ENCODE measurements at regions of chr20 and their contacts with region 1.

Region 1: GRCh38 chr20:58870239-58871014 is 17.9 kb downstream of the GNAS start:
- DNase-seq: peak in 1 of 2 experiments; percentile 69
- H3K4me3 ChIP-seq: no peak overlapping the region
- H3K27ac ChIP-seq: no peak overlapping the region
- H3K4me1 ChIP-seq: no peaks in the 10 kb centered on the region
- H3K27me3 ChIP-seq: no peaks in the 10 kb centered on the region
- CTCF ChIP-seq: peak; percentile 97

Region 2: DNA sequence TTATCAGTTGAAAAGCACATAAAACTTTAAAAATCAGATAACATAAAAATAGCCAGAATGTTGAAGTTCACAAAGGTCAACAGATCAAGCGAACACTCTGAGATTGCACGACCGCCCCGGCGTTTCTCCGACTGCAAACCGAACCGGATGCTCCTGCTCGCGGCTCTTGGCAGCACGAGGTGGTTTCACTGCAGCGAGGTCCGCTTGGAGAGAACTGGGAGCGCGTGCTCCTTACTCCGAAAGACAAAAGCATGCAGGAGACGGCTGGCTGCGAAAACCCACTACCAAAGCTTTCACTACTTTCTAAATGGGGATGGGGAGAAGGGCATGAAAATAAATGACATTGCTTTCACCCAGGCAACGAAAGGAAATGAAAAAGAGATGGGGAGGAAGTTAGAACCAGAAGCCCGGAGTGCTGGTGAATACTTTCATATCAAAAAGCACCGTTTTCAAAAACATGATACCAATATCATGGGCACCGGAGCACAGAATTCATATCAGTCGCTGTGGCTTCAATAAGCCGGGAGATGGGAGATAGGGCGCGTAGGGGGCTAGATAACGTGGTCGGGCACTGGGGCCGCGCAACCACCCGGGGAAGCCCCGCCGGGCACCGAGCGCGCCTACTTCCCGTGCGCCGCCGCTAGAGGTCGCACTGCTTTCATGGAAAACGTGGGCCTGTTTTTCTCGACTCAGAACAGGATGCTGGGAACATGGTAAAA is 633.7 kb before region 1 on chr20:
- CTCF ChIA-PET with region 1: no interaction called
- POLR2A ChIA-PET with region 1: no interaction called
- intact Hi-C with region 1: loop called (anchors 10 kb)
- DNase-seq: peak; percentile 51 to 75
- H3K4me3 ChIP-seq: peak overlapping the region; percentile 68
- H3K27ac ChIP-seq: no peak overlapping the region
- H3K4me1 ChIP-seq: peaks cover 8% of the 10 kb centered on the region; the same call in 1 of the 2 replicates
- H3K27me3 ChIP-seq: no peaks in the 10 kb centered on the region
- CTCF ChIP-seq: peak; percentile 97

Region 3: DNA sequence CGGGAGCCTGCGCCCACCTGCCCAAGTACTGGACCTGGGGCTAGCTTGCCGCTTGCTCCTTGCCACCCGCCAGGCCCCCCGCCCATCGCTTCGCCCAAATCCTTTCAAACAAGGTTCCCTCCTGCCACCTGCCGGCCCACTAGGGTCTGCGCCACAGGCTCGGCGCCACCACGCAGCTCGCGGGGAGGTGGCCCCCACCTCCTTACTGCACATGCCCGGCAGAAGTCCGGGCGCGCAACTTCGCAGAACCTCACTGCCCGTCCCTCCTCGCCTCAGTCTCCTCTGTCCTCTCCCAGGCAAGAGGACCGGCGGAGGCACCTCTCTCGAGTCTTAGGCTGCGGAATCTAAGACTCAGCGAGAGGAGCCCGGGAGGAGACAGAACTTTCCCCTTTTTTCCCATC is 31.0 kb before region 1 on chr20:
- CTCF ChIA-PET with region 1: interaction called, 11 read pairs
- POLR2A ChIA-PET with region 1: no interaction called
- intact Hi-C with region 1: no loop called
- DNase-seq: peak in 1 of 2 experiments; percentile 23
- H3K4me3 ChIP-seq: no peak overlapping the region
- H3K27ac ChIP-seq: no peak overlapping the region
- H3K4me1 ChIP-seq: no peaks in the 10 kb centered on the region
- H3K27me3 ChIP-seq: peaks cover 38% of the 10 kb centered on the region
- CTCF ChIP-seq: peak; percentile 54; the same call in 1 of the 2 replicates

Region 4: DNA sequence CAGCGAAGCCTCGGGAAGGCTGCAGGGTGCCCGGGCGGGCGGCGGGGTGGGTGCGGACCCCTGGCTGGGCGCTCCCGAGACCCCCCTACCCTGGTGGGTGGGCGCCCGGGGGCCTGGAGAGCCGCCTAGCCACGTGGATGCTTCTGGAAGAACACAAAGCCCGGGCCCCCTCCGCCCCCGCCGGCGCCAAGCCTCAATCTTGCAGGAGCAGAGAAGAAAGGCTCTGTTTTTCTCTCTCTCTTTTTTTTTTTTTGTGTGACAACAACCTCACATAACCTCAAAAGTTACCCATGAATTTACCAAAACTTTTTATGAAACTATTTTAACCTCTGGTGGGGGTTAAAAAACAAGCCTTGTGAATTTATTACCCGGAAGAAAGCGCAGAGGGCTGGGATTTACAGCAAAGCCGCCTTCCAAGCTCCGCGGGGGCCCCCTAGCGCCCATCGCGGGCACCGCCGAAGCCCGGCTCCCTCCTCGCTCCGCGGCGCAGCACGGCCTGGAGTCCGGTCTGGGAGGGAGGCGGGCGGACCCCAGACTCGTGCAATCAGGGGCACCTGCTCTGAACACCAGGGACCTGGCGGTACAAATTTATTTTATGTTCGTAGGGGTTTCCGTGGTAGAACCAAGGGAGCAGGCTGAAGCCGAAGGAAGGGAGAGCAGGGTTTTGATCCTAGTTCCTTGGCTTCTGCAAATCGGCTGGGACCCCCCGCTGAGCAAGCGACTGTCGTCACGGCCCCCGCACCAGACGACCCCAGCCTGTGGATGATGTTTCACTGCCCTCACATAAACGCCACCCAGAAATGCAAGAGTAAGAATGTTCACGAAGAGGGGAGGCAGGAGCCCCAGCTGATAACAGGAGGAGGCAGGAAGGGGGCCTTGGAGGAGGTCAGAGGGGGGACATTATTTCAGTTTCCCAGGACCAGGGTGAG is 352.1 kb after region 1 on chr20:
- CTCF ChIA-PET with region 1: interaction called, 7 read pairs
- POLR2A ChIA-PET with region 1: no interaction called
- intact Hi-C with region 1: loop called (anchors 1 kb)
- DNase-seq: peak; percentile 53 to 70
- H3K4me3 ChIP-seq: peak overlapping the region; percentile 50; the same call in 1 of the 2 replicates
- H3K27ac ChIP-seq: no peak overlapping the region
- H3K4me1 ChIP-seq: no peaks in the 10 kb centered on the region
- H3K27me3 ChIP-seq: peaks cover 97% of the 10 kb centered on the region
- CTCF ChIP-seq: peak; percentile 98

Region 5: DNA sequence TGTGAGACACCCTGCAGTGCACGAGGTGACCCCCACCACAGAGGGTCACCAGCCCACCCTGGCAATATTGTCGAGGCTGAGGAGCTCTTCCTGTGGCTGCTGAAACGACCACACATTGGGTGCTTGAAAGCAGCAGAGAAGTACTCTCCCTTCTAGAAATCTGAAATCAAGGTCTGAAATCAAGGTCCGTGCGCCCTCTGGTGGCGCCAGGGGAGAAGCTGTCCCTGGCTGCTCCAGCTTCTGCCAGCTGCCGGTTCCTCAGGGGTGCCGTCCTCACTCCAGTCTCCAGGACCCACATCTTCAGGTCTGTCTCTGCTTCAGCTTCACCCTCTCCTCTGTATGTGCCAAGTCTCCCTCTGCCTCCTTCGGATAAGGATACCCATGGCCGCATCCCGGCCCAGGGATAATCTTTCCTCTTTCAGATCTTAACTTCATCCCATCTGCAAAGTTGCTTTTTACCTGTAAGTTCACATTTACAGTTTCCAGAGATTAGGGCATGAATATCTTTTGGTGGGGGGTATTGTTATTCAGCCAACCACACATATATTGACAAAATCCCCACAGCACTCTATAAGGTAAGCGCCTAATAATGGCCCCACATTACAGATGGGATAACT is 625.6 kb after region 1 on chr20:
- CTCF ChIA-PET with region 1: no interaction called
- POLR2A ChIA-PET with region 1: no interaction called
- intact Hi-C with region 1: loop called (anchors 2 kb)
- DNase-seq: peak; percentile 40 to 64
- H3K4me3 ChIP-seq: no peak overlapping the region
- H3K27ac ChIP-seq: no peak overlapping the region
- H3K4me1 ChIP-seq: no peaks in the 10 kb centered on the region
- H3K27me3 ChIP-seq: peaks cover 84% of the 10 kb centered on the region
- CTCF ChIP-seq: peak; percentile 95

Measured in PC-9 (cell line).